PC-3 (cell line): ENCODE measurements at regions of chr1 and their contacts with region 1.

Region 1: GRCh38 chr1:97920832-97921571 is at the start of gene DPYD:
- DNase-seq: peak; percentile 88
- ATAC-seq: peak; percentile 90
- H3K4me3 ChIP-seq: peak within 1 kb of the TSS; percentile 84
- H3K27ac ChIP-seq: peak within 1 kb of the TSS; percentile 69
- H3K4me1 ChIP-seq: peaks cover 24% of the 10 kb centered on the region
- H3K27me3 ChIP-seq: no peaks in the 10 kb centered on the region
- CTCF ChIP-seq: no peak
- total RNA-seq, gene DPYD: 11.7 and 12.8 TPM in 2 replicates

Region 2: DNA sequence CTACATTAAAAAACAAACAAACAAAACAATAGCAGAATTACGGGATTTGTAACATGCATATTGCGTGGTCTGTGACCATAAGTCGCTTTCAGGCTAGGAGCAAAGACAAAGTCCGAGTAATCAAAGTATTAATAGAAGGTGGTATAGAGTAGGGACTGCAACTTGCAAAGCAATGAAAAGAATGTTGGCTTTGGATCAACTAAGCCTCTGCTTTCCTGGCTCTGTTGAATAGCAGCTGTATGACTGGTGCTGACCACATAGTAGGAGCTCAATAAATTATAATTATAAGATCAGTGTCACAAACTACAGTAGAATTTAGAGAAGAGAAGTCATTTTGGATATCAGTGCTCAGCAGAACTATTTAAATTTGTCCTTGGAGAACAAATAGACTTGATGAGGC is 586.5 kb before region 1 on chr1:
- CTCF ChIA-PET with region 1: no interaction called
- POLR2A ChIA-PET with region 1: no interaction called
- intact Hi-C with region 1: no loop called
- DNase-seq: peak; percentile 33
- ATAC-seq: no peak
- H3K4me3 ChIP-seq: no peak overlapping the region
- H3K27ac ChIP-seq: no peak overlapping the region
- H3K4me1 ChIP-seq: peaks cover 11% of the 10 kb centered on the region
- H3K27me3 ChIP-seq: no peaks in the 10 kb centered on the region
- CTCF ChIP-seq: no peak

Region 3: DNA sequence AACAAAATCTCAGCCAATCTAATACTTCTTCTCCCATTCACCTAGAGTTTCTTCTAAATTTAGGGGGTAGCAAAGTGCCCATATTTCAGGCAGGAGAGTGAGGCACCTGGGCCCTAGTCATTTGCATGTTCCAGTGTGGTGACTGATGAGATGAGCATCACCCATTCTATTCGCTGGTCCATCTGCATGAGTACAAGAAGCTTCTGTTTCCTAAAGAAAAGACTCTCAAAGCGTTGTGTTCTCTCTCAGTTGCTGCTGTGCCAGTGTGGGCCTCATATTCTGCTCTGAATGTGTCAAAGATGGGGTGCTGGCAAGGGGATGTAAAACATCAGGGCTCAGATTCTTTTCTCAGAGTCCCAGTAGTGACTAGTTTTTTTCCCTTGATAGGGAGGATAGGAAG is 16.0 kb after region 1 on chr1:
- CTCF ChIA-PET with region 1: interaction called, 3 read pairs
- POLR2A ChIA-PET with region 1: no interaction called
- intact Hi-C with region 1: loop called (anchors 2 kb)
- DNase-seq: no peak
- ATAC-seq: no peak
- H3K4me3 ChIP-seq: peak overlapping the region; percentile 29; the same call in 1 of the 2 replicates
- H3K27ac ChIP-seq: peak overlapping the region; percentile 87
- H3K4me1 ChIP-seq: peaks cover 23% of the 10 kb centered on the region
- H3K27me3 ChIP-seq: no peaks in the 10 kb centered on the region
- CTCF ChIP-seq: no peak

Region 4: GRCh38 chr1:97989094-97989680 is 68.2 kb after region 1 on chr1:
- CTCF ChIA-PET with region 1: no interaction called
- POLR2A ChIA-PET with region 1: no interaction called
- intact Hi-C with region 1: loop called (anchors 2 kb)
- DNase-seq: peak; percentile 70
- ATAC-seq: peak; percentile 92
- H3K4me3 ChIP-seq: peak overlapping the region; percentile 19; the same call in 1 of the 2 replicates
- H3K27ac ChIP-seq: peak overlapping the region; percentile 67
- H3K4me1 ChIP-seq: peaks cover 21% of the 10 kb centered on the region
- H3K27me3 ChIP-seq: no peaks in the 10 kb centered on the region
- CTCF ChIP-seq: no peak

Region 5: GRCh38 chr1:98086796-98087441 is 165.9 kb after region 1 on chr1:
- CTCF ChIA-PET with region 1: no interaction called
- POLR2A ChIA-PET with region 1: interaction called, 11 read pairs
- intact Hi-C with region 1: no loop called
- DNase-seq: peak; percentile 97
- ATAC-seq: peak; percentile 83
- H3K4me3 ChIP-seq: no peak overlapping the region
- H3K27ac ChIP-seq: peak overlapping the region; percentile 74
- H3K4me1 ChIP-seq: peaks cover 66% of the 10 kb centered on the region
- H3K27me3 ChIP-seq: no peaks in the 10 kb centered on the region
- CTCF ChIP-seq: no peak